ENCODE measurements at regions of chr19 and their contacts with region 1.

Region 1: GRCh38 chr19:51887522-51888498 is at the start of gene ZNF577:
- DNase-seq: peak; percentile 78
- ATAC-seq: peak; percentile 90
- H3K4me3 ChIP-seq: peak within 1 kb of the TSS; percentile 47 to 70 (median 54)
- H3K4me3 Mint-ChIP-seq: peak within 1 kb of the TSS; percentile 94
- H3K27ac ChIP-seq: peak within 1 kb of the TSS in 1 of 2 donors; percentile 49
- H3K27ac Mint-ChIP-seq: peak within 1 kb of the TSS; percentile 88
- H3K4me1 ChIP-seq: peaks cover 0 to 4% of the 10 kb centered on the region in 2 donors
- H3K4me1 Mint-ChIP-seq: no peaks in the 10 kb centered on the region
- H3K27me3 ChIP-seq: no peaks in the 10 kb centered on the region
- H3K27me3 Mint-ChIP-seq: no peaks in the 10 kb centered on the region
- CTCF ChIP-seq: no peak
- total RNA-seq, gene ZNF577: 26.0 and 27.9 TPM in 2 replicates

Region 2: GRCh38 chr19:51904331-51905165 is 16.7 kb after region 1 on chr19 and contains the start of gene ZNF649:
- CTCF ChIA-PET with region 1: no interaction called
- POLR2A ChIA-PET with region 1: no interaction called
- intact Hi-C with region 1: loop called (anchors 2 kb)
- DNase-seq: peak; percentile 90
- ATAC-seq: peak; percentile 95
- H3K4me3 ChIP-seq: peak within 1 kb of the TSS; percentile 66 to 97 (median 91)
- H3K4me3 Mint-ChIP-seq: peak within 1 kb of the TSS; percentile 99
- H3K27ac ChIP-seq: peak within 1 kb of the TSS; percentile 81 to 83
- H3K27ac Mint-ChIP-seq: peak within 1 kb of the TSS; percentile 98
- H3K4me1 ChIP-seq: peaks cover 6 to 15% of the 10 kb centered on the region in 2 donors
- H3K4me1 Mint-ChIP-seq: peaks cover 21% of the 10 kb centered on the region
- H3K27me3 ChIP-seq: peaks cover 0 to 19% (median 3%) of the 10 kb centered on the region in 4 experiments
- H3K27me3 Mint-ChIP-seq: peaks cover 24% of the 10 kb centered on the region
- CTCF ChIP-seq: no peak
- total RNA-seq, gene ZNF649: 35.7 and 36.3 TPM in 2 replicates

Measured in B cell (primary cell).